IMR-90 (cell line): ENCODE measurements at regions of chr1 and their contacts with region 1.

Region 1: DNA sequence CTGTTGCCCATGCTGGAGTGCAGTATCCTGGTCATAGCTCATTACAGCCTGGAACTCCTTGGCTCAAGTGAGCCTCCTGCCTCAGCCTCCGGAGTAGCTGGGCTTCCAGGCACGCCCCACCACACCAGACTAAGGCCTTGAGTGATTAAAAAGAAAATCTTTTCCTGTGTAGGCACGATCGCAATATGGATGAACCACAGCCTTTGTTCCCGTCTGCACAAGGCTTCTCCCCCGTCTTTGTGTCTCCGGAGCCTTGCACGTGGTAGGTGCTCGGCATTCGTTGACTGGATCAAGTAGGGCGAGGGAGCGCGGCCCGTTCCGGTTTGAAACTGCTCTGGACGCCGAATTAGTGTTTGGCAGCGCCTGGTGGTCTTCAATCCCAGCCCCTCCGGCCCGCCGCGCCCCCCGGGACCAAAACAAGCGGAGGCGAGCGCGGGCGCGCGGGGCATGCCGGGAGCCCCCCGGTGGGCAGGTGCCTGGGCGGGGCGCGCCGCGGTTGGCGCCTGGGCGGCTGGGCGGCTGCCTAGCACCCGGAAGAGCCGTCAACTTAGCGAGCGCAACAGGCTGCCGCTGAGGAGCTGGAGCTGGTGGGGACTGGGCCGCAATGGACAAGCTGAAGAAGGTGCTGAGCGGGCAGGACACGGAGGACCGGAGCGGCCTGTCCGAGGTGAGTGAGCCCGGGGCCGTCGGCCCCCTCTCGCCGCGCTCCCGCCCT is at the start of gene SFT2D2:
- DNase-seq: peak; percentile 67
- ATAC-seq: peak; percentile 95
- H3K4me3 ChIP-seq: peak within 1 kb of the TSS; percentile 85
- H3K27ac ChIP-seq: peak within 1 kb of the TSS; percentile 86
- H3K4me1 ChIP-seq: peaks cover 3% of the 10 kb centered on the region
- H3K27me3 ChIP-seq: no peaks in the 10 kb centered on the region; the same call in 1 of the 2 replicates
- CTCF ChIP-seq: no peak
- POLR2A ChIP-seq: peak; percentile 9; the same call in 1 of the 2 replicates
- RAD21 ChIP-seq: no peak
- total RNA-seq, gene SFT2D2: 37.6 and 42.2 TPM in 2 replicates

Region 2: GRCh38 chr1:168136709-168137514 is 88.7 kb before region 1 on chr1 and contains the start of gene GPR161:
- CTCF ChIA-PET with region 1: no interaction called
- POLR2A ChIA-PET with region 1: no interaction called
- dilution Hi-C with region 1: no loop called
- in situ Hi-C with region 1: no loop called
- intact Hi-C with region 1: no loop called
- DNase-seq: peak; percentile 36
- ATAC-seq: peak; percentile 72
- H3K4me3 ChIP-seq: peak within 1 kb of the TSS; percentile 70
- H3K27ac ChIP-seq: peak within 1 kb of the TSS; percentile 76
- H3K4me1 ChIP-seq: peaks cover 3% of the 10 kb centered on the region; the same call in 1 of the 2 replicates
- H3K27me3 ChIP-seq: 0 out of 2 replicates have a peak, but pooled peaks cover 2% of the 10 kb centered on the region
- CTCF ChIP-seq: no peak
- POLR2A ChIP-seq: no peak
- RAD21 ChIP-seq: no peak
- total RNA-seq, gene GPR161: 11.1 and 13.3 TPM in 2 replicates

Region 3: GRCh38 chr1:168159251-168159650 is 66.4 kb before region 1 on chr1:
- CTCF ChIA-PET with region 1: no interaction called
- POLR2A ChIA-PET with region 1: no interaction called
- dilution Hi-C with region 1: no loop called
- in situ Hi-C with region 1: no loop called
- intact Hi-C with region 1: no loop called
- DNase-seq: no peak
- ATAC-seq: no peak
- H3K4me3 ChIP-seq: no peak overlapping the region
- H3K27ac ChIP-seq: no peak overlapping the region
- H3K4me1 ChIP-seq: no peaks in the 10 kb centered on the region
- H3K27me3 ChIP-seq: no peaks in the 10 kb centered on the region; the same call in 1 of the 2 replicates
- CTCF ChIP-seq: no peak
- POLR2A ChIP-seq: no peak
- RAD21 ChIP-seq: no peak

Region 4: DNA sequence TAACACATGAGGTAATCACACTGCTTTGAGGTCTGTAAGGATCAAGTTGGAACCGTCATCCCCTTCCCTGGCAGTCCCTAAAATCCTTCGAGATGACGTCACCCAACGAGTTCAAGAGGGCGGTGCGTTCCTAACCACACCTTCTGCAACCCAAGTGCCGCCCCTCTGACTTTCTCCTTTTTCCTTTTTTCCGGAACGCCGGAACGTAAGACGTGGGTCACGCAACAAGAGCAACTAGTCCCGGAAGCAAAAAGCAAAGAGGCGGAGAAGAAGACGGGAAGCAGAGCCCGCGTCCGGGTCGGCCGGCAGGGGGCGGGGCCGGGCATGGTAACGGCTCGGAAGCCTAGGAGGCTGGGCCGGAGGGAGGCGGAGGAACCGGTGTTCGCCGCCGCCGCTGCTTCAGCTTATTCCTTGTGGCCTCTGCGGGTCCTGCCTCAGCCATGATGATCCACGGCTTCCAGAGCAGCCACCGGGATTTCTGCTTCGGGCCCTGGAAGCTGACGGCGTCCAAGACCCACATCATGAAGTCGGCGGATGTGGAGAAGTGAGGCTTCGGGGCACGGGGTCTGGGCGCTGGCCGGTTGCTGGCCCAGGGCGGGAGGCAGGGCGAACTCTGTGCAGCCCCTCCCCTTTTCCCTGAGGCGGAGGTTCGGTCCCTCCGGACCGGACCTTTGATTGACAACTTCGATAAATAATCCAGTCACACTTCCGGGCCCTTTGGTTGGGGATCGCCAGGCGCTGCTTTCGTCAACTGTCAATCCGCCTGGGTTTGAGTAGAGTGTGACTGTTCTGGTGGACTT is 46.8 kb before region 1 on chr1 and contains the start of gene TIPRL:
- CTCF ChIA-PET with region 1: no interaction called
- POLR2A ChIA-PET with region 1: no interaction called
- dilution Hi-C with region 1: no loop called
- in situ Hi-C with region 1: no loop called
- intact Hi-C with region 1: loop called (anchors 2 kb)
- DNase-seq: peak; percentile 100
- ATAC-seq: peak; percentile 97
- H3K4me3 ChIP-seq: peak within 1 kb of the TSS; percentile 74
- H3K27ac ChIP-seq: peak within 1 kb of the TSS; percentile 89
- H3K4me1 ChIP-seq: no peaks in the 10 kb centered on the region
- H3K27me3 ChIP-seq: no peaks in the 10 kb centered on the region
- CTCF ChIP-seq: peak; percentile 65
- POLR2A ChIP-seq: peak; percentile 68
- RAD21 ChIP-seq: peak; percentile 31; the same call in 1 of the 2 replicates
- total RNA-seq, gene TIPRL: 15.4 and 41.1 TPM in 2 replicates

Region 5: GRCh38 chr1:168321945-168322344 is 96.3 kb after region 1 on chr1:
- CTCF ChIA-PET with region 1: no interaction called
- POLR2A ChIA-PET with region 1: no interaction called
- dilution Hi-C with region 1: no loop called
- in situ Hi-C with region 1: no loop called
- intact Hi-C with region 1: loop called (anchors 5 kb)
- DNase-seq: peak; percentile 41
- ATAC-seq: no peak
- H3K4me3 ChIP-seq: no peak overlapping the region
- H3K27ac ChIP-seq: no peak overlapping the region
- H3K4me1 ChIP-seq: peaks cover 4% of the 10 kb centered on the region; the same call in 1 of the 2 replicates
- H3K27me3 ChIP-seq: no peaks in the 10 kb centered on the region
- CTCF ChIP-seq: peak; percentile 33; the same call in 1 of the 2 replicates
- POLR2A ChIP-seq: no peak
- RAD21 ChIP-seq: peak; percentile 26; the same call in 1 of the 2 replicates

Region 6: GRCh38 chr1:168509875-168510791 is 284.5 kb after region 1 on chr1:
- CTCF ChIA-PET with region 1: no interaction called
- POLR2A ChIA-PET with region 1: no interaction called
- dilution Hi-C with region 1: no loop called
- in situ Hi-C with region 1: no loop called
- intact Hi-C with region 1: no loop called
- DNase-seq: no peak
- ATAC-seq: no peak
- H3K4me3 ChIP-seq: no peak overlapping the region
- H3K27ac ChIP-seq: no peak overlapping the region
- H3K4me1 ChIP-seq: peaks cover 5% of the 10 kb centered on the region
- H3K27me3 ChIP-seq: peaks cover 1% of the 10 kb centered on the region; the same call in 1 of the 2 replicates
- CTCF ChIP-seq: no peak
- POLR2A ChIP-seq: no peak
- RAD21 ChIP-seq: no peak